ENCODE measurements at regions of chr12 and their contacts with region 1.

Region 1: GRCh38 chr12:31682136-31682962 is 22.9 kb downstream of the ETFBKMT start:
- DNase-seq: no peak
- ATAC-seq: peak; percentile 68

Region 2: GRCh38 chr12:31482816-31483215 is 199.5 kb before region 1 on chr12:
- intact Hi-C with region 1: no loop called
- DNase-seq: no peak
- ATAC-seq: no peak

Region 3: GRCh38 chr12:32051559-32052414 is 369.4 kb after region 1 on chr12:
- intact Hi-C with region 1: loop called (anchors 10 kb)
- DNase-seq: no peak
- ATAC-seq: no peak

Measured in Right ventricle myocardium inferior (tissue), 1 donor.